PC-3 (cell line): ENCODE measurements at regions of chr2 and their contacts with region 1.

Region 1: DNA sequence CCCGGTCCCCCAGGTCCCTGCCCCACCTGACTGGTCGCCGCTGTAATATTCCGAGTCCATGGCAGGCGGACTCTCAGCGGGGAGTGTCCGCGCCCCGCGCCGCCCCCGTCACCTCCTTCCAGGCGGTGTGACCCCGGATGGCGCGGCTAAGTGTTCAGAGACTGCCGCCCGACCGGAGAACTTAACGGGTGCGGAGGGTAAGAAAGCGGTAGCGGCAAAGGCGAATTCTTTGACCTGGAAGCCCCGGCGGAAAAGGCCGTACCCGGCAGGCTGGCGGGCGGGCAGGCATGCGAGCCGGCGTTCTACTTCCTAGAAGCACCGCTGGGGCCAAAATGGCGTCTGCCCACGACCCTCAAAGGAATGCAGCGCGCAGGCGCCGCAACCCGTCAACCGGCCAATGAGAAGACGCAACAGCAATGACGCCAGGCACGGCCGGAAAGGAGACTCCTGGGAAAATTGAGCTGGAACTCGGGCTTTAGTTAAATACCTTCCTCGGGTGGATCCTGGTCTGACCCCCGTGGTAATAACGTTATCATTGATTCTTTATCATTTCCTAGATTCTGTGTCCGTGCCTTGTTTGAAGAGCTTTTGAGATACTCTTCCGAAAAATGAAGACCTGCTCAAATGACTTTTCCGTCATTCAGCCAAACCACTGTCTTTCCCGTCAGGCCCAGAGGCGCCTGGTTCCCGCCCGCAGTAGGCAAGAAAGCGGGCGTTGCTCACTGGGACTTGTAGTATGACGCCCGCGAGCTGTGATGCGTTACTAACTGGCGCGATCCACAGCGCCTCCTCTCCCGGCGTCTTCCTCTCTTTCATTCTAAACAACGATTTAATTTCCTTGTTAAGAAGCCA is at the start of gene IWS1:
- DNase-seq: peak; percentile 96
- ATAC-seq: peak; percentile 86
- H3K4me3 ChIP-seq: peak within 1 kb of the TSS; percentile 95
- H3K27ac ChIP-seq: peak within 1 kb of the TSS; percentile 90
- H3K4me1 ChIP-seq: peaks cover 37% of the 10 kb centered on the region
- H3K27me3 ChIP-seq: no peaks in the 10 kb centered on the region
- CTCF ChIP-seq: 0 out of 2 replicates have a peak, but pooled peaks have one; percentile 32
- total RNA-seq, gene IWS1: 51.4 and 63.6 TPM in 2 replicates

Region 2: DNA sequence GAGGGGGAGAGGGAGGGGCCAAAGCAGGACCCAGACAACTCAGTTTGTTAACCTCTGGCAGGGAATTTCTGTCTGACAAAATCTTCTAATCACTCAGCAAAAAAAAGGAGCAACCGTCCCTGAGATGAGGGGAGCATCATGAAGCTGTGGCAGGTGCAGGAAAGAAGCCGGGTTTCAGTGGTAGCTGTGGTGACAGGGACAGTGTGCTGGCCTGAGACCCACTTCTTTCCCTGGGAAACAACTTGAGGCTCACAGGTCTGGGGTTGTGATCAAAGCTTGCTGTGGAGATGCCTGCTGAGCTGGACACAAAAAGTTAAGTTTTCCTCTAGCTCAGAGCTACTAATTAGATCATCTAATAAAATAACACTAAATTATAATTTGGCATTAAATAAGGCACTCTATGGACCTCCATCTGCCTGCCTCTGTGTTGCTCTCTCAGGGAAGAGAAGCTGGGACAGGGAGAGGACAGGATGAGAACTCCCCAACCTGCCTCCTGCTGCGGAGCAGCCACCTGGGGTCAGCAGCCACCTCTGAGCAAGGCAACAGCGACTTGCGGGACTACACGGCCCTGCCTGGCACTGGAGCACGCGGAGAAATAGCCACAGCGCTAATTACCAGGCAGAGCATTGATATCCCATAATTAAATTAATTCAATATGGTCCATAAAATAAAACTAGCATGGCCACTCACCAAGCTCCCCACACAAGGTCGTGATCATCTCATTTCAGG is 732.3 kb before region 1 on chr2:
- CTCF ChIA-PET with region 1: no interaction called
- POLR2A ChIA-PET with region 1: no interaction called
- intact Hi-C with region 1: no loop called
- DNase-seq: no peak
- ATAC-seq: no peak
- H3K4me3 ChIP-seq: no peak overlapping the region
- H3K27ac ChIP-seq: no peak overlapping the region
- H3K4me1 ChIP-seq: no peaks in the 10 kb centered on the region
- H3K27me3 ChIP-seq: peaks cover 66% of the 10 kb centered on the region
- CTCF ChIP-seq: no peak

Region 3: DNA sequence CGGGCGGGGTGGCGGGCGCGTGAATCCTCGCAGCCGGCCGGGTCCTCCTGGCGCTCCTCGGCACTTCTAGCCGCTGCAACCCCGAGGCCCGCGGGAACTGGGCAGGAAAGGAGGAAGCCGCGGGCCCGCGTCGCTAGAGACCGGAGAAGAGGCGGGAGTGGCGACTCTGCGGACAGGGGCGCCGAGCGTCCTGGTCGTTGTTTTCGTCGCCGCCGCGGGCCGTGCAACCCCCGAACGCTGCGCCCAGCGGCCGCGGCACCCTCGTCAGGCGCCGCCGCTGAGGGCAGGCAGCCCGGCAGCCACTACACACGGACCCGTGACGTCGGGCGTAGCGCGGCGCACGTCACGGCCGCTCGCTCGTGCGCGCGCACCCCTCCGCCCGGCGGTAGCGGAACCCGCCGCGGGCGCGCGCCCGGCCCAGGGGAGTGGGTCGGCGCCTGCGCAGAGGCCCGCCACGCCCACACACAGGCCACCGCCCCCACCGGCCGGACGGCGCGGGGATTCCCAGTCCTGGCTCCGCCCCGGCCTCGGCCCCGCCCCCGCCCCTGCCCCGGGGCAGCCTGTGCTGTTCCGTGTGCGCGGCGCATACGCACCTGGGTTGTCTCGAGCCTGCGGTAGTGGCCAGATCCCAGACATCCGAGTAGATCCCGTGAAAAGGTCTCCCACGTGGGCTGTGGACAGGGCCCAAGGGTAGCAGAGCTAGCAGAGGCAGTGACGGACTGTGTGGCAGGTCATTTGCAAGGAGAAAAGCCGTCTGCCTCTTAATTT is 138.5 kb before region 1 on chr2 and contains the start of gene MAP3K2:
- CTCF ChIA-PET with region 1: no interaction called
- POLR2A ChIA-PET with region 1: no interaction called
- intact Hi-C with region 1: no loop called
- DNase-seq: peak; percentile 96
- ATAC-seq: peak; percentile 79
- H3K4me3 ChIP-seq: peak within 1 kb of the TSS; percentile 84
- H3K27ac ChIP-seq: peak within 1 kb of the TSS; percentile 90
- H3K4me1 ChIP-seq: peaks cover 28% of the 10 kb centered on the region
- H3K27me3 ChIP-seq: no peaks in the 10 kb centered on the region
- CTCF ChIP-seq: no peak
- total RNA-seq, gene MAP3K2: 54.6 and 64.7 TPM in 2 replicates

Region 4: GRCh38 chr2:127508631-127509034 is 17.7 kb before region 1 on chr2:
- CTCF ChIA-PET with region 1: no interaction called
- POLR2A ChIA-PET with region 1: interaction called, 6 read pairs
- intact Hi-C with region 1: loop called (anchors 1 kb)
- DNase-seq: peak; percentile 99
- ATAC-seq: peak; percentile 95
- H3K4me3 ChIP-seq: peak overlapping the region; percentile 31; the same call in 1 of the 2 replicates
- H3K27ac ChIP-seq: peak overlapping the region; percentile 79
- H3K4me1 ChIP-seq: peaks cover 42% of the 10 kb centered on the region
- H3K27me3 ChIP-seq: no peaks in the 10 kb centered on the region
- CTCF ChIP-seq: no peak

Region 5: GRCh38 chr2:128770143-128771085 is 1244.0 kb after region 1 on chr2:
- CTCF ChIA-PET with region 1: no interaction called
- POLR2A ChIA-PET with region 1: no interaction called
- intact Hi-C with region 1: no loop called
- DNase-seq: no peak
- ATAC-seq: no peak
- H3K4me3 ChIP-seq: no peak overlapping the region
- H3K27ac ChIP-seq: no peak overlapping the region
- H3K4me1 ChIP-seq: no peaks in the 10 kb centered on the region
- H3K27me3 ChIP-seq: no peaks in the 10 kb centered on the region
- CTCF ChIP-seq: no peak